Gastrocnemius medialis (tissue), 4 donors: ENCODE measurements at regions of chr11 and their contacts with region 1.

Region 1: GRCh38 chr11:26350002-26350401 is 18.1 kb downstream of the ANO3 start:
- DNase-seq: no peak
- ATAC-seq: no peak
- H3K4me3 ChIP-seq: no peak overlapping the region
- H3K27ac ChIP-seq: no peak overlapping the region
- H3K4me1 ChIP-seq: no peaks in the 10 kb centered on the region
- H3K27me3 ChIP-seq: no peaks in the 10 kb centered on the region
- CTCF ChIP-seq: no peak
- POLR2A ChIP-seq: no peak

Region 2: DNA sequence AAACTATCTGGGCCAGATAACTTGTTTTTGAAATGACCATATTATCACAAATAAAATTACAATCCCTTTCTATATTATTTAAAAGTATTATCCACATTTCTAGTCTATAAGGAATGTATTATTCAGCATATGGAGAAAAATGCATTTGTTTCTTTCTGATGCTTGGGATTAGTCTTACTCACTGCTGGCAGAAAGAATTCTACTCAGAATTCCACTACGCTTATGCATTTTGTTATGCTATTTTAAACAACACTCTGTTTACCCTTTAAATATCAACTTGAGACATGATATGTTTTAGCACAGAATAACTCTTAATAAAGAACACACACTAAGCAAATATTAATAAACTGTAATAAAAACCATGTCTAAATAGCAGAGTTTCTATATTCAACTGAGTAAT is 95.6 kb before region 1 on chr11:
- in situ Hi-C with region 1: loop called in 1 of 4 experiments (anchors 25 kb)
- intact Hi-C with region 1: no loop called
- DNase-seq: no peak
- ATAC-seq: no peak
- H3K4me3 ChIP-seq: no peak overlapping the region
- H3K27ac ChIP-seq: no peak overlapping the region
- H3K4me1 ChIP-seq: no peaks in the 10 kb centered on the region
- H3K27me3 ChIP-seq: no peaks in the 10 kb centered on the region
- CTCF ChIP-seq: no peak
- POLR2A ChIP-seq: no peak

Region 3: DNA sequence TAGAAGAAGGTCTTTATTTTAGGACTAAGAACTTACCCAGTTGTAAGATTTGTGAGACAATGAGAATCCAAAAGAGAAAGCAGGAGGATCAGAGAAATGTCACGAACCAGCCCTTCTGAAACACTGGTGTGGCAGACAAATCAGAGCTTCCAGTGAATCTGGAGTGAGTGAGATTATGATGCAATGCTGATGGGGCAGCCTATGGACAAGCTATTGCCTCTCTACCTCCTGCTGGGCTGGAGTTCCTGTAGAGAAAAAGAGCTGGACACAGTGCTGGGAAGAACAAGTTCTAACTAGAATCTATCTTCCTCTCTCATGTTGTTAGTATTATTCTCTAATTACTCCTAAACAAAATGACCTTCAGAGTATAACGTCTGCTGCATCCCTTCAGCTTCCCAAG is 30.1 kb before region 1 on chr11:
- in situ Hi-C with region 1: no loop called
- intact Hi-C with region 1: no loop called
- DNase-seq: no peak
- ATAC-seq: no peak
- H3K4me3 ChIP-seq: no peak overlapping the region
- H3K27ac ChIP-seq: no peak overlapping the region
- H3K4me1 ChIP-seq: no peaks in the 10 kb centered on the region
- H3K27me3 ChIP-seq: no peaks in the 10 kb centered on the region
- CTCF ChIP-seq: no peak
- POLR2A ChIP-seq: no peak